Activated B cell treated with CpG ODN at 0.5 μM for 24 hours (primary cell): ENCODE measurements at regions of chr2 and their contacts with region 1.

Region 1: GRCh38 chr2:200703127-200703925 is 108.4 kb upstream of the BZW1 start:
- DNase-seq: no peak
- ATAC-seq: no peak
- H3K4me3 Mint-ChIP-seq: no peak overlapping the region
- H3K27ac Mint-ChIP-seq: no peak overlapping the region
- H3K4me1 Mint-ChIP-seq: peaks cover 5% of the 10 kb centered on the region
- H3K27me3 Mint-ChIP-seq: peaks cover 13% of the 10 kb centered on the region
- CTCF ChIP-seq: no peak

Region 2: GRCh38 chr2:200578778-200579177 is 124.5 kb before region 1 on chr2:
- CTCF ChIA-PET with region 1: interaction called, 4 read pairs
- POLR2A ChIA-PET with region 1: no interaction called
- intact Hi-C with region 1: loop called (anchors 1 kb)
- DNase-seq: no peak
- ATAC-seq: peak; percentile 42
- H3K4me3 Mint-ChIP-seq: no peak overlapping the region
- H3K27ac Mint-ChIP-seq: no peak overlapping the region
- H3K4me1 Mint-ChIP-seq: no peaks in the 10 kb centered on the region
- H3K27me3 Mint-ChIP-seq: peaks cover 2% of the 10 kb centered on the region
- CTCF ChIP-seq: no peak

Region 3: DNA sequence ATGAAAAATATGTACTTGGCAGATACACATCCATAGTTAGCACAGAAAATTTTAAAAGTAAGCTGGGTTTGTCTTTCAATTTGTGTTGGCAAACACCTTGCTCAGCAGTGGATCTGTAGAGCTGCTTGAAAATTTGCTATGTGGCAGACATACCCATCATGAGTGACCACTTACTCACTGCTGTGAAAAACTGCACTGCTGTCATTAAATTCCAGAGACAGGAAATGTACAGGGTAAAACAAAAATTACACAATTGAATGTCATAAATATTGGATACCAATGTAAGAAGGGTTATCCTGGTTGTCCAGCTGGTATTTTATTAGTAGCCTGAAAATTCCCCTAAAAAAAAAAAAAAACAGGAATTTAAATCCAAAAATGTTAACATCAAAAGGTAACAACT is 210.3 kb after region 1 on chr2:
- CTCF ChIA-PET with region 1: no interaction called
- POLR2A ChIA-PET with region 1: no interaction called
- intact Hi-C with region 1: no loop called
- DNase-seq: no peak
- ATAC-seq: no peak
- H3K4me3 Mint-ChIP-seq: no peak overlapping the region
- H3K27ac Mint-ChIP-seq: no peak overlapping the region
- H3K4me1 Mint-ChIP-seq: no peaks in the 10 kb centered on the region
- H3K27me3 Mint-ChIP-seq: no peaks in the 10 kb centered on the region
- CTCF ChIP-seq: no peak

Region 4: GRCh38 chr2:201500534-201500933 is 797.2 kb after region 1 on chr2:
- CTCF ChIA-PET with region 1: no interaction called
- POLR2A ChIA-PET with region 1: no interaction called
- intact Hi-C with region 1: no loop called
- DNase-seq: no peak
- ATAC-seq: no peak
- H3K4me3 Mint-ChIP-seq: no peak overlapping the region
- H3K27ac Mint-ChIP-seq: no peak overlapping the region
- H3K4me1 Mint-ChIP-seq: no peaks in the 10 kb centered on the region
- H3K27me3 Mint-ChIP-seq: no peaks in the 10 kb centered on the region
- CTCF ChIP-seq: no peak